MCF 10A (cell line): ENCODE measurements at regions of chr12 and their contacts with region 1.

Region 1: DNA sequence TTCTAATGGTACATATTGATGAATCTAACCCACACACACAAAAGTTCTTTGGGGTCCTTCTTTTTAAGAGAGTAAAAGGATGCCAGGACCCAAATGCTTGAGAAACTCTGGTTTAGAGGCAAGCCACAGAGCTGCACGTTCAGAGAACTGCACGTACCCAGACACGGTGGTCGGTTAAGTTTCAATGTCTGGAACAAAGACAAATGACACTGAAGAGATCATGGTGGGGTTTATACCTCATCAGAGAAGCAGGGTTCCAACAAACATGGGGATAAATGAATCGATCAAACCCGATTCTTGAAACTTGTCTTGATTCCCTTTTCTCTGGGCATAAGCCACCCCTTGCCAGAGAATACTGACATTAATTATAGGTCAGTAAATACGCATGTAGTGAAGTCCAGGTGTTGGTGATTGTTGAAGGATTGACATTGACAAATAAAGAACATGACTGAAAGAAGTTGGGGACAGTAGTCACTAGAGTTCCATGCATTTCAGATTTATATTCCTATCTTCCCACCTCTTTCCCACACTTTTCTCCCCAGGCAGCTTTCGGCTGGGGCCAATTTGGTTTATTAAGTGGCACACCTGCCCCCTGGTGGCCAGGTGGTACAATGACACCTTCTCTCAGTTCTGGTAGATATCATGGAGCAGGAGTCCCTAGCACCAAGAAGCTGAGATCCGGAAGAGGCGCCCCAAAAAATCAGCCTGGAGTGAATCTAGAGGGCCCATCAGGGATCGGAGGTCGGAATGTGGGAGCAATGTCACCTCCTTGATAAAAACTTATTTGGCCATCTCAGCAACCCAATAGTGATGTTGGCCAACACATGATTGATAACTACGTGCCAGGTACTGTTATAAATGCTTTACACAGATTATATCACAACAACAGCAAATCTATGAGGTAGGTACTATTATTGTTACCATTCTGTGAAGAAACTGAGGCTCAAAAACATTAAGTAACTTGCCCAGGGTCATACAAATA is 17.8 kb upstream of the HDAC7 start:
- DNase-seq: peak; percentile 86
- H3K4me3 Mint-ChIP-seq: no peak overlapping the region
- H3K27ac Mint-ChIP-seq: no peak overlapping the region
- H3K4me1 Mint-ChIP-seq: peaks cover 21% of the 10 kb centered on the region
- H3K27me3 Mint-ChIP-seq: no peaks in the 10 kb centered on the region
- CTCF ChIP-seq: peak; percentile 92

Region 2: DNA sequence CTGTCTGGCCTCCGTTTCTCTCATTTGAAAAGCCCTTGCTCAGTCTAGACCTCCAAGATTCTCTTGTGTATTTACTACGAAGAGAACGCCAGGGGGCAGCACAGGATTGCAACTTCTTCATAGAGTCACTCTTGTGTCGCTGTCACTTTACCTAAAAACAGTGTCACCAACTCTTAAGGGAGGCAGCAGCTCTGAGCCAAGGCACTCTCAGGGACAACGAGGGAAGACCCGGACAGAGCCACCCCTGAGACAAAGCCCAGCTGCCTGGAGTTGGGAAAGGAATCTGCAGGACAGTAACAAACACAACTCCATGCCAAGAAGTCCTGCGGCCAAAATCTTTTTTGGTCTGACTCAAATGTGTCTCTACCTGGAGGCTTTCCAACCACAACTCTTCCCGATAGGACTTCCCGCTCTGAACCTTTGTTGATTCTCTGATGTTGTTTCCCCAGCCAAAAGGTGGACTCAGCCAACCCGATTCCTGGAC is 122.0 kb before region 1 on chr12:
- CTCF ChIA-PET with region 1: interaction called, 50 read pairs
- POLR2A ChIA-PET with region 1: interaction called, 3 read pairs
- intact Hi-C with region 1: loop called (anchors 1 kb)
- DNase-seq: peak; percentile 97
- H3K4me3 Mint-ChIP-seq: peak overlapping the region; percentile 63
- H3K27ac Mint-ChIP-seq: no peak overlapping the region
- H3K4me1 Mint-ChIP-seq: peaks cover 15% of the 10 kb centered on the region
- H3K27me3 Mint-ChIP-seq: no peaks in the 10 kb centered on the region
- CTCF ChIP-seq: peak; percentile 85

Region 3: GRCh38 chr12:47773062-47773857 is 64.2 kb before region 1 on chr12 and contains the start of gene SLC48A1:
- CTCF ChIA-PET with region 1: interaction called, 622 read pairs
- POLR2A ChIA-PET with region 1: interaction called, 13 read pairs
- intact Hi-C with region 1: no loop called
- DNase-seq: peak; percentile 61
- H3K4me3 Mint-ChIP-seq: peak within 1 kb of the TSS; percentile 74
- H3K27ac Mint-ChIP-seq: peak within 1 kb of the TSS; percentile 59
- H3K4me1 Mint-ChIP-seq: peaks cover 18% of the 10 kb centered on the region
- H3K27me3 Mint-ChIP-seq: no peaks in the 10 kb centered on the region
- CTCF ChIP-seq: no peak
- total RNA-seq, gene SLC48A1: 19.4 and 20.2 TPM in 2 replicates

Region 4: GRCh38 chr12:47797441-47797840 is 40.0 kb before region 1 on chr12:
- CTCF ChIA-PET with region 1: interaction called, 622 read pairs
- POLR2A ChIA-PET with region 1: interaction called, 7 read pairs
- intact Hi-C with region 1: loop called (anchors 1 kb)
- DNase-seq: no peak
- H3K4me3 Mint-ChIP-seq: no peak overlapping the region
- H3K27ac Mint-ChIP-seq: no peak overlapping the region
- H3K4me1 Mint-ChIP-seq: peaks cover 5% of the 10 kb centered on the region
- H3K27me3 Mint-ChIP-seq: no peaks in the 10 kb centered on the region
- CTCF ChIP-seq: no peak

Region 5: DNA sequence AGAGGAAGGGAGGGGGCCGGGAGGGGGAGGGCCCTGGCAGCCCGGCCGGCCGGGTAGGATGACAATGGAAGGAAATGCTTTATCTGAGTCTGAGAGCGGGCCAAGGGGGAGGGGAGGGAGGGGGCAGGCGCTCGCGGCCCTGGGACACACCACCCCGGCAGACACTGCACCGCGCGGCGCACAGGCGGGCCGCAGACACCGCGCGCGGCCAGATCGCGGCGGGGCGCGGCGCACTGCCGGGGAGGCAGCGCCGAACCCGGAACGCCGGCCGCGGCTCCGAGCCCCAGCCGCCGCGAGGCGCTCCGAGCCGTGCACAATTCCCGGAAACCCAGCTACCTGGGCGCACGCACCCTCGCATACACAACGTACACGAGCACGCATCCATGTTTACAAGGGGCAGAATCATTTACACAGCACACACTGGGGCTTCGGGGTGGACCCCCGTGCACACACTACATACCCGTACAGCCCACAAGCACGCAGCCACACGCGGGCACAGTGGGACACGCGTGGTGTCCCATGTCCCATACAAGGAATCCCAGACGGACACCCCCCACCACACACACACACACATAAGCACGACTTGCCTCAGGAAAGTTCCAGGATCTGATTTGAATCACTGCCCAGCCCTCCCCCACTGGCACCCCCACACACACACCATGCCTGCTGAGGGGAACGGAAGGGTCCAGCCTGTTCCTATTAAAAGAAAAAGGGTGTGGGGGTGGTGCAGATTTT is 17.4 kb before region 1 on chr12 and contains the start of gene HDAC7:
- CTCF ChIA-PET with region 1: interaction called, 96 read pairs
- POLR2A ChIA-PET with region 1: interaction called, 110 read pairs
- intact Hi-C with region 1: loop called (anchors 1 kb)
- DNase-seq: peak; percentile 81
- H3K4me3 Mint-ChIP-seq: peak within 1 kb of the TSS; percentile 98
- H3K27ac Mint-ChIP-seq: peak within 1 kb of the TSS; percentile 93
- H3K4me1 Mint-ChIP-seq: peaks cover 73% of the 10 kb centered on the region
- H3K27me3 Mint-ChIP-seq: no peaks in the 10 kb centered on the region
- CTCF ChIP-seq: no peak
- total RNA-seq, gene HDAC7: 65.0 and 80.1 TPM in 2 replicates

Region 6: DNA sequence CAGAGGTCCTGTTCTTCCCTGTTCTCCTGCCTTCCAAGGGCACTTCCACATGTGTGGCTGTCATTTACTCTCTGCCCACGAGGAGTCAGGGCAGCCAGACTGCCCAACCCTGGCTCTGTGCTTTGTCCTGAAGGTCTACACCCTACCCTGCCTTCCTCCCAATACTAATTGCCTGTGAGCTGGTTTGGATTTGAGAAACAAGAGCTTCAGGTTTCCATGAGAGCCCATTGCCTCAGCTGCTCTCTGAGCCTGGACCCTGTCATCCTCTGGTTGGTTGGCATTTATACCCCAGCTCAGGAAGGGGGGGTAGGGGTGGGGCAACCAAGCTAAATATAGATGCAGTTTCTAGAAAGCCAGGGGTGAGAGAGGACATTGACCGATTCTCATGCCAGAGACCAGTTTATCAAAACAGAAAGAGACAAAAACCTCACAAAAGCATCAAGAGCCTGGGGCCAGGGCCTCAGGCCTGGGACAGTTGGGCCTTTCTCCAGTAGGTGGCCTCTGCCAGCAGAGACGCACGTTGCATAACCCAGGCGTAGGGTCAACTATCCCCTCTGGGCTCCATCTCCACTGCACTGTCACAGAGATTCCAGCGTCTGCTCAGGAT is 32.8 kb after region 1 on chr12:
- CTCF ChIA-PET with region 1: interaction called, 11 read pairs
- POLR2A ChIA-PET with region 1: interaction called, 3 read pairs
- intact Hi-C with region 1: no loop called
- DNase-seq: peak; percentile 46
- H3K4me3 Mint-ChIP-seq: no peak overlapping the region
- H3K27ac Mint-ChIP-seq: no peak overlapping the region
- H3K4me1 Mint-ChIP-seq: peaks cover 6% of the 10 kb centered on the region
- H3K27me3 Mint-ChIP-seq: no peaks in the 10 kb centered on the region
- CTCF ChIP-seq: peak; percentile 31

Region 7: GRCh38 chr12:47949441-47950308 is 112.2 kb after region 1 on chr12:
- CTCF ChIA-PET with region 1: interaction called, 15 read pairs
- POLR2A ChIA-PET with region 1: no interaction called
- intact Hi-C with region 1: loop called (anchors 5 kb)
- DNase-seq: peak; percentile 88
- H3K4me3 Mint-ChIP-seq: no peak overlapping the region
- H3K27ac Mint-ChIP-seq: no peak overlapping the region
- H3K4me1 Mint-ChIP-seq: peaks cover 45% of the 10 kb centered on the region
- H3K27me3 Mint-ChIP-seq: no peaks in the 10 kb centered on the region
- CTCF ChIP-seq: peak; percentile 82